GM10248 (cell line): ENCODE measurements at regions of chr6 and their contacts with region 1.

Region 1: DNA sequence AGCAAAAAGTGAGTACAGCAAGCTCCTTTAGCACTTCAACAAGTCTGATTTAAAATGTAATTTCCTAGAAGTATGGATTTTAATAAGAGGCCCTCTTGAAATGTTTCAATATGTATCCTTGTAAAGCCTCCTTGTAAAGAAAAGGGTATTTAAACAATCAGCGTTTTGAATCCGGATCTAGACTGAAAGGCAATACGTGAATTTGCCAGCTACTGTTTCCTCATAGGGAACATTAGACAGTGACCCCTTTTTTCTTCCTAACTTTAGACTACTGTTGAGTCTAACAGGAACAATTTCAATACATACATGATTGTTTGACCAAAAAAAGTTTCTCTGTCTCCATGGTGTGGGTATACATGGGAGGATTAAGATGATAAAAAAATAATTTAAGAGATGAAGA is 395.0 kb downstream of the TFAP2A start:
- DNase-seq: no peak
- CTCF ChIP-seq: no peak

Region 2: DNA sequence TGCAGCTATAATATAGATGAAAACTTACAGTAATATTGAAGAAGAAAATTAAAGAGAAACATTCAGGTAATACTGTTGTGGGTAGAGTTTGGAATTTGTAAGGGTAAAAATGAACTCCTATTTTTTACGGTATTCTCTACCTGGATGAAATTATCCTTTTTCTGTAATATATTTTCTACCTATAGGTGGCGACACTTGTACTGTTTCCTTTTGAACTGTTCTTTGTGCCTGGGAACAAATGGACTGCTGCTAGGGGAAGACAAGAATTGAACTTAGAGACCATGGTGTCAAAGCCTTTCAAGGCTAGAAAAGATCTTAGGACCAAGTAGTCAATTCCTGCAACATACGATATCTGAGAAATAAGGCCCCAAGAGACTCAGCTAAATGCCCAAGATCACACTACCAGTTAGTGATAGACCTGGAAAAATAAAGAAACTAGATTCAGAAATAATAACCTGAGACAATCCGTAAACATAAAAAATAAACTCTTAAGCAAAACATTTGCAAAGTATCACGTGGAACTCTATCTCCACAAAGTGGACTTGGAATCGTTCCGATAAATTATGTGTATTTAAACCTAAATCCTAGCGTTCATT is 11.2 kb after region 1 on chr6:
- CTCF ChIA-PET with region 1: interaction called, 17 read pairs
- POLR2A ChIA-PET with region 1: no interaction called
- DNase-seq: peak; percentile 12
- CTCF ChIP-seq: peak; percentile 25